MCF 10A (cell line): ENCODE measurements at regions of chr2 and their contacts with region 1.

Region 1: GRCh38 chr2:65064728-65065552 is 8.7 kb downstream of the CEP68 start:
- DNase-seq: peak; percentile 90
- H3K4me3 Mint-ChIP-seq: peak overlapping the region; percentile 7
- H3K27ac Mint-ChIP-seq: peak overlapping the region; percentile 65
- H3K4me1 Mint-ChIP-seq: peaks cover 20% of the 10 kb centered on the region
- H3K27me3 Mint-ChIP-seq: no peaks in the 10 kb centered on the region
- CTCF ChIP-seq: peak; percentile 42

Region 2: DNA sequence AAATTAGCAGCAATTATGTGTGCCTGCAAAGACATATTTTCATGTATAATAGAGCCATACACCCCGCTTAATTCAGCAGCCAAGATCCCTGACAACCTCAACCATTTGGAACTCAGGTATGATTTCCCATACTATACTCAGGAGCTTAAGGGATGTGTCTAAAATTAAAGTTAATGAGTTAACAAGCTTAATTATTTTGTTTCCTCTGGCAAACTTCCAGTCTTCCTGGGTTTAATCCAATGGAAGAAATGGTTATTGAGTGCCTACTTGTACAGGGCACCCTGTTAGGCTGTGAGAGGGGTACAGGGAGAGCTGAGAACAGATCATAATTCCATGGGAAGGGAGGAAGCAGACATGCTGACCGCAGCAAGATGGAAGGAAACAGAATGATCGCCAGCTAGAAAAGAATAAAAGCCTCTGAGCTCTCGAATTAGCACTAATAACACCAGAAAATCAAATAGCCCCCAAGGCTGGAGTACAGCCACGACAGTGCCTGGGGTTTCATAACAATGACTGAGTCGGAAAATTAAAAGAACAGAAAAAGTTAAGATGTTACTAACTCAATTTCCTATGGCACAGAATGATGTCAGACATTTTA is 29.5 kb before region 1 on chr2:
- CTCF ChIA-PET with region 1: no interaction called
- POLR2A ChIA-PET with region 1: no interaction called
- intact Hi-C with region 1: no loop called
- DNase-seq: no peak
- H3K4me3 Mint-ChIP-seq: no peak overlapping the region
- H3K27ac Mint-ChIP-seq: no peak overlapping the region
- H3K4me1 Mint-ChIP-seq: peaks cover 18% of the 10 kb centered on the region
- H3K27me3 Mint-ChIP-seq: no peaks in the 10 kb centered on the region
- CTCF ChIP-seq: no peak

Region 3: DNA sequence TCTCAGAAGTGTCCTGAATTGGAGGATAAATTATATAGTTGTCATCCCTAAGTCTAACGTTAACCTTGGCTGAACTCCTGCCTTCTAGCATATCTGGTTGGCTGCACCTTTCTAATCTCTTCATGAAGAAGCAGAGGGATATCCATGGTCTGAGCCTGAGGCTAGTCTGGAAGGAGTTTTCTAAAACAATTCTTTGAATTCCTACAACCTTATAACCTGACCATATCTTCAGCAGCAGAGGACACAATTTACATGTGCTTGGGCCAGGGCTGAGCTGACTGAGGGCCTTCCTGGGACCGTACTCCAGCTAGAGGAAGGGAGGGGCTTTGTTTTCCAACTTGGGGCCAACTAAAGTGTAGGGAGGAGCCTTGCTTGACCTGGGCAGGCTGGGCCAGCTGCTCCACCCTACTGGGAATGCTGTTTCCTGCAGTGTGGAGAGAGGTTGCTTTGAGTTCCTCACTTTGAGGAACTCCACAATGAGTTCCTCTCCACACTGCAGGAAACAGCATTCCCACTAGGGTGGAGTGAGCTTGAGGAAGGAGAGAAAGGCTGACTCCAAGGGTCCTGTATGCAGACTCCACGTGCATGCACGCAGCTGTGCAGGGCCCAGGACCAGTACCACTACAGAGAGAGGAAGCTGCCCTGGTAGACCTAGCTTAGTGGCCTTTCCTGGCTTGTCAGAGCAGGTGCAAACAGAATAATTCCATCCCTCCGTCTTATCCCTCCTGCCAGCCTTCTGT is 10.8 kb after region 1 on chr2:
- CTCF ChIA-PET with region 1: interaction called, 10 read pairs
- POLR2A ChIA-PET with region 1: interaction called, 72 read pairs
- intact Hi-C with region 1: no loop called
- DNase-seq: peak; percentile 20
- H3K4me3 Mint-ChIP-seq: no peak overlapping the region
- H3K27ac Mint-ChIP-seq: peak overlapping the region; percentile 31
- H3K4me1 Mint-ChIP-seq: peaks cover 17% of the 10 kb centered on the region
- H3K27me3 Mint-ChIP-seq: no peaks in the 10 kb centered on the region
- CTCF ChIP-seq: no peak

Region 4: GRCh38 chr2:65186872-65187851 is 122.2 kb after region 1 on chr2:
- CTCF ChIA-PET with region 1: interaction called, 47 read pairs
- POLR2A ChIA-PET with region 1: interaction called, 5 read pairs
- intact Hi-C with region 1: loop called (anchors 2 kb)
- DNase-seq: peak; percentile 83
- H3K4me3 Mint-ChIP-seq: no peak overlapping the region
- H3K27ac Mint-ChIP-seq: no peak overlapping the region
- H3K4me1 Mint-ChIP-seq: peaks cover 5% of the 10 kb centered on the region
- H3K27me3 Mint-ChIP-seq: no peaks in the 10 kb centered on the region
- CTCF ChIP-seq: peak; percentile 67